ENCODE measurements at regions of chr3 and their contacts with region 1.

Region 1: DNA sequence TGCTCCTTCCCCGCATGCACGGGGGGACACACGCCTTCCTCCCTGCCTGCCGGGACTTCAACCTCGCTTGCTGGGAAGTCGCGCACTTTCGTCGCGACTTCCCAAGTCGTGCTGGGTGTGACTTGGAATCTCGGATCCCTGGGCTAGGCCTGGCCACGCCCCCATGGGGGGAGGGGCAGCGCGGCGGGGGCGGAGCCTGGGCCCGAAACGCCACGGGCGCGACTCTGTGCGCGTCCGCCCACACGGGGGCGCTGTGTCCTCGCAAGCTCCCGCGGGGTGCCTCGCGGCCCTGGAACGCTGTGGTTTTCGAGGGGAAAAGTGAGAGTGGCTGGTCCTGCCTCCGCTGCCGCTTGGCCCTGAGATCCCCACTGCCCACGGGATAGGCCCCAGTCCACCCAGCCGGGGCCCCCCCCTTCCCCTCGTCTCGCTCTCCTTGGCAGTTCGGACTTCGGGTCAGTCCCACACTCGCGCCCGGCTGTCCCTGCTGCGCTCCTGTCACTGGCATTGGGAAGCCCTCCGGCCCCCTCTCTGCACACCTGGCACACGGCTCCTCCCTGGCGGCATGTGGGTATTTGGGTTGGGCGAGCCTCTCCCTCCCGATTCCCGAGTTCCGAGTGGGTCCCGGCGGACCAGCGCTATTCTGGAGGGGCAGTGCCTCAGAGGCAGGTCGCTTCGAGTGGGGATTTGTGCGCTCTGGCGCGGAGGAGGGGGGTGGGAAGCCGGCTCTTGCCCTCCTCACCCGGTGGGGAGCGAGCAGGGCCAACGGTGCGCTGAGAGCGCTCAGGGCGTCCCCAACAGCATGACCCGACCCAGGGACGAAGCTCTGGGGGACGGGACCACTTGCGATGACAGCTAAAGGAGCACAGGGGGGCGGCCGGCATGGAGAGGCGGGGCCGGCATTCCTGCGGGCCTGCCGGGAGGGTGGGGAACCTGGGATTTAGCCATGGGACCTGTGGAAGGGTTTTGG is 23.6 kb downstream of the SEC61A1 start:
- DNase-seq: peak; percentile 86 to 95 (median 91)
- ATAC-seq: peak; percentile 81 to 91 (median 85)
- H3K4me3 ChIP-seq: peak overlapping the region; percentile 8 to 63 (median 52)
- H3K27ac ChIP-seq: peak overlapping the region in 6 of 12 donors; percentile 26 to 60 (median 50)
- H3K4me1 ChIP-seq: peaks cover 0 to 65% (median 29%) of the 10 kb centered on the region in 12 donors
- H3K27me3 ChIP-seq: no peaks in the 10 kb centered on the region
- CTCF ChIP-seq: peak; percentile 94 to 99 (median 98)
- POLR2A ChIP-seq: peak in 1 of 2 donors; percentile 36

Region 2: GRCh38 chr3:128123538-128124368 is 48.0 kb after region 1 on chr3 and contains the start of gene RUVBL1:
- intact Hi-C with region 1: loop called in 1 of 10 experiments (anchors 5 kb)
- DNase-seq: peak; percentile 98 to 99 (median 98)
- ATAC-seq: peak; percentile 100
- H3K4me3 ChIP-seq: peak within 1 kb of the TSS; percentile 70 to 98 (median 86)
- H3K27ac ChIP-seq: peak within 1 kb of the TSS; percentile 31 to 90 (median 79)
- H3K4me1 ChIP-seq: peaks cover 0 to 15% (median 11%) of the 10 kb centered on the region in 12 donors
- H3K27me3 ChIP-seq: no peaks in the 10 kb centered on the region
- CTCF ChIP-seq: no peak
- POLR2A ChIP-seq: peak in 1 of 2 donors; percentile 65
- total RNA-seq, gene RUVBL1: 19.1 to 39.9 (median 26.2) TPM

Region 3: DNA sequence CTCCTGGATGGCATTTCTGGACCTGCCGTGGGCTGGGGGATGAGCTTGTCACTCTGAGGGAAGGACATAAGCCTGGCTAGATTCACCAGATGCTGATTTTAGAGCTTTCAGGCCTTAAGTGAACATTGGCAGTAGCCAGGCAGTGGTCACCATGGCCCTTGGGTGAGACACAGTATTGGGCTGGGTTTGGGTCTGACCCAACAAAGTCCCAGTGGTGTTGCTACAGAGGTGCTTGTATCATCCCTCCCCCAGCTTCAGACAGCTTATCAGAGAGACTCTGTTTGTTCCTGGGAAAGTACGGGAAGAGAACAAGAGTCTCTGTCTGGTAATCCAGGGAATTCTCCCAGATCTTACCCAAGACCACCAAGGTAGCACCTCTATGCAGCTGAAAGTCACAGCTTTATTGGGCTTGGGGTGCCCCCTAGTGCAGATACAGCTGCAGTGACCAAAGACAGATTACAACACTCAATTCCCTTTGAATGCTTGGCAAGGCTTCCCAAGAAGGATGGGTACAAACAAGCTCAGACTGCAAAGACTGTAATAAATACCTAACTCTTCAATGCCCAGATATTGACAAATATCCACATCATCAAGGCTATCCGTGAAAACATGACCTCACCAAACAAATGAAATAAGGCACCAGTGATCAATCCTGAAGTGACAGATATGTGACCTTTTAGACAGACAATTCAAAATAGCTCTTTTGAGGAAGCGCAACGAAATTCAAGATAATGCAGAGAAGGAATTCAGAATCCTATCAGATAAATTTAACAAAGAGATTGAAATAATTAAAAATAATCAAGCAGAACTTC is 57.7 kb after region 1 on chr3:
- intact Hi-C with region 1: loop called in 4 of 10 experiments (anchors 5 kb)
- DNase-seq: no peak
- ATAC-seq: peak; percentile 26 to 75 (median 68)
- H3K4me3 ChIP-seq: no peak overlapping the region
- H3K27ac ChIP-seq: no peak overlapping the region
- H3K4me1 ChIP-seq: no peaks in the 10 kb centered on the region
- H3K27me3 ChIP-seq: no peaks in the 10 kb centered on the region
- CTCF ChIP-seq: peak; percentile 35 to 64 (median 58)
- POLR2A ChIP-seq: no peak

Region 4: GRCh38 chr3:128322066-128323022 is 246.5 kb after region 1 on chr3:
- intact Hi-C with region 1: loop called in 1 of 10 experiments (anchors 10 kb)
- DNase-seq: peak; percentile 41 to 80 (median 49)
- ATAC-seq: peak; percentile 45 to 72 (median 56)
- H3K4me3 ChIP-seq: no peak overlapping the region
- H3K27ac ChIP-seq: no peak overlapping the region
- H3K4me1 ChIP-seq: peaks cover 0 to 14% (median 0%) of the 10 kb centered on the region in 12 donors
- H3K27me3 ChIP-seq: no peaks in the 10 kb centered on the region
- CTCF ChIP-seq: peak; percentile 34 to 72 (median 56)
- POLR2A ChIP-seq: no peak

Region 5: GRCh38 chr3:128603811-128604775 is 528.3 kb after region 1 on chr3:
- intact Hi-C with region 1: loop called in 2 of 10 experiments (anchors 5 to 10 kb)
- DNase-seq: no peak
- ATAC-seq: no peak
- H3K4me3 ChIP-seq: no peak overlapping the region
- H3K27ac ChIP-seq: no peak overlapping the region
- H3K4me1 ChIP-seq: peaks cover 0 to 15% (median 7%) of the 10 kb centered on the region in 12 donors
- H3K27me3 ChIP-seq: no peaks in the 10 kb centered on the region
- CTCF ChIP-seq: no peak
- POLR2A ChIP-seq: no peak